HEK293 (cell line): ENCODE measurements at regions of chr6 and their contacts with region 1.

Region 1: DNA sequence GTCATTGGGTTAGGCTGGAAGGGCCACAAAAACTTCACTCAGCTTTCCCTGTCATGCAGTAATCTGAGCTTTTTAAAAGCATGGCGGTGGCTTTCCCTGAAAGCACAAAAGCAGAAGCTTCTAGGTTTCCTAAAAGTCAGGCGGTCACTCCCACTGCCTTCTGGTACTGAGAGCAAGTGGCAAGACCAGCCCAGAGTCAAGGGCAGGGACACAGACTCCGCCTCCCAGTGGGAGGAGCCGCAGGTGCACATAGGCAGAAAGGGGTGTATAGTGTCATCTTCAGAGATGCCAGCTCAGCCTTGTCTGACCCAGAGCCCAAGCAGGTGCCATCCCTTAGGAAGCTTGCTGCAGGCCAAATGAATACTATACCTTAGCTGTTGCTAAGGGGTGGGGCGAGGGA is 18.0 kb upstream of the PACSIN1 start:
- H3K4me3 ChIP-seq: no peak overlapping the region
- H3K27ac ChIP-seq: no peak overlapping the region
- H3K4me1 ChIP-seq: no peaks in the 10 kb centered on the region
- CTCF ChIP-seq: no peak

Region 2: GRCh38 chr6:34425498-34426410 is 22.2 kb before region 1 on chr6 and contains the start of gene RPS10:
- CTCF ChIA-PET with region 1: interaction called, 4 read pairs
- POLR2A ChIA-PET with region 1: interaction called, 17 read pairs
- H3K4me3 ChIP-seq: peak within 1 kb of the TSS; percentile 58
- H3K27ac ChIP-seq: peak within 1 kb of the TSS; percentile 97
- H3K4me1 ChIP-seq: peaks cover 2% of the 10 kb centered on the region; the same call in 1 of the 2 replicates
- CTCF ChIP-seq: no peak

Region 3: GRCh38 chr6:34459899-34460593 is 12.1 kb after region 1 on chr6:
- CTCF ChIA-PET with region 1: interaction called, 13 read pairs
- POLR2A ChIA-PET with region 1: no interaction called
- H3K4me3 ChIP-seq: no peak overlapping the region
- H3K27ac ChIP-seq: no peak overlapping the region
- H3K4me1 ChIP-seq: no peaks in the 10 kb centered on the region
- CTCF ChIP-seq: peak; percentile 57